ENCODE measurements at regions of chr20 and their contacts with region 1.

Region 1: GRCh38 chr20:49853640-49854039 is 41.0 kb downstream of the SLC9A8 start:
- DNase-seq: peak; percentile 22 to 91 (median 67)

Region 2: DNA sequence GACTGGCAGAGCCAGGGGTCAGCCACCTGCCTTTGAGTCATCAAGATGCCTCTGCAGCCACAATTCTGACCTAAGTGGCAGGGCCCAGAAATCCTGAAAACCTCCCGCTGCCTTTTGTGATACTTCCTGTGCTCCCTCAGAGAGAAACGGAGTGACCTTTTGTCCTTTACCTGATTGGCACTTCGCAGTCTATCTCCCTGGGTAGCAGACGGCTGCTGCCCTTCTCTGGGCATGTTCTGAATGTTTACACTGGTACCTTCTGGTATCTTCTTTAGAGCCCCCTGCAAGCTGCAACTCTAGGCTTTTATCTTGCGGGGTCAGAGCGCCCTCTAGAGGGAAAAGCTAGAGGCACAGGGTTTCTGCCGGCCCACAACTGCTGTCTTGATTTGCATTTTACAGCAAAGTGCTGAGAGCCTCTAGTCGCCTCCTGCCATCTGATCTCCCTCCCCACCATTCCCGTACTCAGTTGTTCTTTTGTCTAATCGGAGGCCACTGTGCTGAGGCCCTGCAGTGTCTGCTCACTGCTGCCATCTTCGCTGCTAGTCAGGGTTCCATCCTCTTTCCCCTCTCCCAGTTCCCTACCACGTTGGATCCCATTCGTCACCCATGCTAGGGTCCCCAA is 34.8 kb after region 1 on chr20:
- intact Hi-C with region 1: loop called (anchors 5 kb)
- DNase-seq: peak; percentile 57 to 95 (median 86)